ENCODE measurements at regions of chr9 and their contacts with region 1.

Region 1: GRCh38 chr9:129413537-129414376 is 207.1 kb downstream of the C9orf50 start:
- DNase-seq: peak; percentile 95 to 100 (median 98)
- ATAC-seq: peak; percentile 89
- H3K4me3 ChIP-seq: peak overlapping the region; percentile 76
- H3K4me3 Mint-ChIP-seq: peak overlapping the region; percentile 84 to 94 (median 90)
- H3K27ac ChIP-seq: peak overlapping the region; percentile 100
- H3K27ac Mint-ChIP-seq: peak overlapping the region; percentile 95 to 100 (median 99)
- H3K4me1 ChIP-seq: peaks cover 17 to 20% of the 10 kb centered on the region in 2 donors
- H3K4me1 Mint-ChIP-seq: peaks cover 5 to 43% (median 33%) of the 10 kb centered on the region in 7 donors
- H3K27me3 ChIP-seq: no peaks in the 10 kb centered on the region
- H3K27me3 Mint-ChIP-seq: peaks cover 0 to 2% (median 0%) of the 10 kb centered on the region in 5 donors

Region 2: GRCh38 chr9:129333953-129334724 is 79.6 kb before region 1 on chr9:
- CTCF ChIA-PET with region 1: no interaction called
- POLR2A ChIA-PET with region 1: interaction called, 3 read pairs
- intact Hi-C with region 1: loop called in 1 of 2 experiments (anchors 2 kb)
- DNase-seq: peak in 4 of 9 donors; percentile 28 to 36 (median 32)
- ATAC-seq: peak; percentile 67
- H3K4me3 ChIP-seq: no peak overlapping the region
- H3K4me3 Mint-ChIP-seq: peak overlapping the region; percentile 3 to 88 (median 78)
- H3K27ac ChIP-seq: peak overlapping the region; percentile 38
- H3K27ac Mint-ChIP-seq: peak overlapping the region; percentile 29 to 91 (median 83)
- H3K4me1 ChIP-seq: peaks cover 3 to 28% of the 10 kb centered on the region in 2 donors
- H3K4me1 Mint-ChIP-seq: peaks cover 17 to 41% (median 25%) of the 10 kb centered on the region in 7 donors
- H3K27me3 ChIP-seq: no peaks in the 10 kb centered on the region
- H3K27me3 Mint-ChIP-seq: peaks cover 0 to 8% (median 0%) of the 10 kb centered on the region in 5 donors

Region 3: GRCh38 chr9:129436751-129437625 is 23.2 kb after region 1 on chr9:
- CTCF ChIA-PET with region 1: no interaction called
- POLR2A ChIA-PET with region 1: interaction called, 4 read pairs
- intact Hi-C with region 1: loop called in 1 of 2 experiments (anchors 1 kb)
- DNase-seq: peak in 8 of 9 donors; percentile 21 to 52 (median 45)
- ATAC-seq: peak; percentile 75
- H3K4me3 ChIP-seq: peak overlapping the region; percentile 62
- H3K4me3 Mint-ChIP-seq: peak overlapping the region; percentile 80 to 93 (median 85)
- H3K27ac ChIP-seq: peak overlapping the region; percentile 32
- H3K27ac Mint-ChIP-seq: peak overlapping the region in 7 of 9 donors; percentile 25 to 89 (median 70)
- H3K4me1 ChIP-seq: peaks cover 10 to 19% of the 10 kb centered on the region in 2 donors
- H3K4me1 Mint-ChIP-seq: peaks cover 21 to 37% (median 27%) of the 10 kb centered on the region in 7 donors
- H3K27me3 ChIP-seq: peaks cover 5 to 8% of the 10 kb centered on the region in 2 donors
- H3K27me3 Mint-ChIP-seq: peaks cover 27 to 73% (median 32%) of the 10 kb centered on the region in 5 donors

Region 4: GRCh38 chr9:129487642-129488409 is 74.1 kb after region 1 on chr9:
- CTCF ChIA-PET with region 1: no interaction called
- POLR2A ChIA-PET with region 1: interaction called, 5 read pairs
- intact Hi-C with region 1: loop called (anchors 1 kb)
- DNase-seq: peak in 5 of 9 donors; percentile 29 to 54 (median 43)
- ATAC-seq: peak; percentile 3
- H3K4me3 ChIP-seq: peak overlapping the region; percentile 70
- H3K4me3 Mint-ChIP-seq: peak overlapping the region; percentile 75 to 92 (median 90)
- H3K27ac ChIP-seq: peak overlapping the region; percentile 66
- H3K27ac Mint-ChIP-seq: peak overlapping the region; percentile 87 to 99 (median 94)
- H3K4me1 ChIP-seq: peaks cover 32 to 46% of the 10 kb centered on the region in 2 donors
- H3K4me1 Mint-ChIP-seq: peaks cover 36 to 68% (median 58%) of the 10 kb centered on the region in 7 donors
- H3K27me3 ChIP-seq: no peaks in the 10 kb centered on the region
- H3K27me3 Mint-ChIP-seq: no peaks in the 10 kb centered on the region

Measured in naive thymus-derived CD4-positive, alpha-beta T cell (primary cell).